G401 (cell line): ENCODE measurements at regions of chr7 and their contacts with region 1.

Region 1: DNA sequence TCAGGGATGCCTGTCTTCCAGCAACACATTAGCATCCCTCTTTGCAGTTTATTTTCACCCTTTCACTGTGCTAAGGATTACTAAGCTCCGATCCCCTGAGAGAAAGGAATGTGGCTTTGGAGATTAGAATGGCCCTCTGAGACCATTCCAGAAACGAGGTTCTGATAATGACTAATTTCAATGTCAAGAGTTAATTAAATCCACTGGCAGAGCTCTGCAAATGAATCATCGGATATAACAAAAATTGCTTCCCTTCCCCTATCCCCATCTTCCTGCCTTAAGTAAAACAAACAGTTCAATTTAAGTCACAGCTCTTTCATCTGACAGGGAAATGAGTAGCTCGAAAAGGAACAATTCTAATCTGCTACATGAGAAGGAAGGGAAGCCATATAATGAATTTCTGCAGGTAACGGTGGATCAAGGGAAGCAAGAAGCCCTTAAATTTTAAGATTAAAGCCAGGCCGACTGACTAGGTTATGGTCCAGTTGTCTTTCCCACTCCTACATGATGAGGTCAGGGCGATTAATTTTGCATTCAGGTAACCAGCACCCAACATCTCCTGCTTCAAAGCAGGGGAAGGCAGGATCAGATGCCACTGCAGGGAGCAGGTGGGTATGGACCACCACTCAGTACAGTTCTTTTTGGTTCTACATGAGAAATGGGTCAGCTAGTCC is 50.5 kb downstream of the MALSU1 start:
- DNase-seq: no peak

Region 2: DNA sequence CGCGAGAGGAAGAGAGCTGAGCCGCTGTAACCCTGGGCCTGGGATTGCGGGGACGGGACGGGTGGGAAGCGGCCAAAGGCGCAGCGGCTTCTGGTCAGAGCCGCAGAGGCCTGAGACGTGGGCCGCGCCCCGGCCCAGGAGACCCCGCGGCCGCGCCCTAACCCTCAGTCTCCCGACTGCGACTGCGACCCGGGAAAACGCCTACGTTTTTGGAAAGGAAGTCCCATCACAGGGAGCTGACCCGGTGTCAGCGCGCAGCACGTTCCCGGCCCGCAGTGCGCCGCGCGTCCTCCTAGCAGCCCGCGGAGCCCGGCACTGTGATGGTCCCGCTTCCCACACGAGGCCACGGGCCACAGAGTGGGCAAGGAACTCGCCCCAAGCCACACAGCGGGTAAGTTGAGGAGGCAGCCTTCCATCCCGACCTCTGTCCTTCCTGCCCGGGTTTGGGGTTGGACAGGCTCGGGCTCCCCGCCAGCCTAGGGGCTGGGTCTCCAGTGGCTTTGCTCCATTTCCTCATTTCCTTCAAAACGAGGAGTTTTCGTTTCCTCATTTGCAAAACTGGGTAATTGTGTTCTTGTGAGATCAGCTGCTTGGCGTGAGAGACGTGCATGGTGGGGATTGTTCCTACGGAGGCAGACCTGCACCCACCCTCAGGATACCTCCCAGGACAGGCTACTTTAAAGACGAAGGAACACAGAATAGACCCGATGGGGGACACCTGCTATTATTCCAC is 101.9 kb before region 1 on chr7:
- in situ Hi-C with region 1: no loop called
- DNase-seq: peak; percentile 9

Region 3: DNA sequence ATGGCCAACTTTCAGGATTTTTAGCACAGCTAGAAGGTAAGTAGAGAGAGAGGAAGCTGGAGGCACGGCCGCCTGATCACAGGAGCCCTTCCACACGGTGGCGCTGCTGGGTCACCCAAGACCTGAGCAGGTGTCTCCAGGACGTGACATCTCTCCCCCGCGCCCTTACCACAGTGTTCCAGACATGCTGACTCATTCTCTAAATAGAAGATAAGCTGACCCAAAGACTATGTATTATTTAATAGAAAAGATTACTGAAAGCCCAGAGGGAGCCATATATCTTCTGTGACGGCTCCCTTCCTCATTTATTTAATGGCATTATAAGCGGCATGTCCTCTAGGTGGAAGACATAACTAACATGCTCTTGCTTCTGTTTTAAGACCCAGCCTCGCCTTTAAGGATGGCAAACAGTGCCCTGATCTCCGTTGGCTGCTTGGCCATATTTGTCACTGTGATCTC is 76.5 kb before region 1 on chr7:
- in situ Hi-C with region 1: loop called (anchors 5 kb)
- DNase-seq: peak; percentile 47

Region 4: GRCh38 chr7:23394488-23395171 is 45.0 kb after region 1 on chr7:
- in situ Hi-C with region 1: no loop called
- DNase-seq: no peak